Activated T-helper 1 cell treated with anti-CD3 and anti-CD28 coated beads, Interleukin-12 subunit alpha, Interleukin-12 subunit beta, Interleukin-2, Interleukin-4 antibody, amounts not matched to agents 30 ng/mL and 10 ng/mL and 1 ng/mL, durations not matched to agents 14 hours and 24 hours and 36 hours (primary cell): ENCODE measurements at regions of chr15 and their contacts with region 1.

Region 1: GRCh38 chr15:75201609-75202250 is at the start of gene C15orf39:
- DNase-seq: peak; percentile 74
- H3K4me3 Mint-ChIP-seq: peak within 1 kb of the TSS; percentile 92
- H3K27ac Mint-ChIP-seq: peak within 1 kb of the TSS; percentile 90
- H3K4me1 Mint-ChIP-seq: peaks cover 62% of the 10 kb centered on the region
- H3K27me3 Mint-ChIP-seq: peaks cover 4% of the 10 kb centered on the region
- total RNA-seq, gene C15orf39: 46.1 and 49.5 TPM in 2 replicates

Region 2: DNA sequence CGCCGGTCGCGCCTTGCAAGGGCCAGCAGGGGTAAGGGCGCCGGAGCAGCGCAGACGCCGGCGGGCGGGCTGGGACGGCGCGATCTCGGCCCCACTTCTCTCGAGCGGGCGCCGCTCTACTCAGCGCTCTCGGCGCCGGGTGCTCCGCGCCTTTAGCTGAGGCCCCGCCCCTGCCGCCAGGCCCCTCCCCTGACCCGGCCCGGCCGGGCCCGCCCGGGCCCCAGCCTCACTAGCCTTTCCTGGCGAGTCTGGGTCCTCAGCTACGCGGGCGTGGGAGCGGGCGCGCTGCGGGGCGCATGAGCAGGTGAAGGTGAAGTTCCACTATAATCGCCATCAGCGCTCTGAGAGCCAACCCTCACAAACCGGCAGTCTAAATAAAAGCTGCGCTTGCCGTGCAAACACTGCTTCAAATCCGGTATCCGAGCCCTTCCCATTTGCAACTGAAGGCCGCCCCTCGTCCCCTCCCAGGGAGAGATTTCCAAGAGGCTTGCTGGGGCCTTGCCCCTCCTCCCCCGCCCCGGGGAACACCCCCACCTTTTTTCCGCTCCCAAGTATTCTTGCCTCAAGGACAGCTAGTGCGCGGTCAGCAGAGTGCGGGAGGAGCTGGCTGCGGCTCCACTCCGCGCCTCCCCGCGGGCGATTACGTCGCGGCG is 245.0 kb before region 1 on chr15 and contains the start of gene RPP25:
- intact Hi-C with region 1: loop called (anchors 1 kb)
- DNase-seq: peak; percentile 69
- H3K4me3 Mint-ChIP-seq: peak within 1 kb of the TSS; percentile 70
- H3K27ac Mint-ChIP-seq: no peak within 1 kb of the TSS
- H3K4me1 Mint-ChIP-seq: peaks cover 36% of the 10 kb centered on the region
- H3K27me3 Mint-ChIP-seq: peaks cover 44% of the 10 kb centered on the region
- total RNA-seq, gene RPP25: 13.3 and 15.3 TPM in 2 replicates

Region 3: GRCh38 chr15:75029378-75030022 is 172.2 kb before region 1 on chr15:
- intact Hi-C with region 1: loop called (anchors 1 kb)
- DNase-seq: peak; percentile 80
- H3K4me3 Mint-ChIP-seq: peak overlapping the region; percentile 37
- H3K27ac Mint-ChIP-seq: peak overlapping the region; percentile 51
- H3K4me1 Mint-ChIP-seq: peaks cover 52% of the 10 kb centered on the region
- H3K27me3 Mint-ChIP-seq: no peaks in the 10 kb centered on the region

Region 4: DNA sequence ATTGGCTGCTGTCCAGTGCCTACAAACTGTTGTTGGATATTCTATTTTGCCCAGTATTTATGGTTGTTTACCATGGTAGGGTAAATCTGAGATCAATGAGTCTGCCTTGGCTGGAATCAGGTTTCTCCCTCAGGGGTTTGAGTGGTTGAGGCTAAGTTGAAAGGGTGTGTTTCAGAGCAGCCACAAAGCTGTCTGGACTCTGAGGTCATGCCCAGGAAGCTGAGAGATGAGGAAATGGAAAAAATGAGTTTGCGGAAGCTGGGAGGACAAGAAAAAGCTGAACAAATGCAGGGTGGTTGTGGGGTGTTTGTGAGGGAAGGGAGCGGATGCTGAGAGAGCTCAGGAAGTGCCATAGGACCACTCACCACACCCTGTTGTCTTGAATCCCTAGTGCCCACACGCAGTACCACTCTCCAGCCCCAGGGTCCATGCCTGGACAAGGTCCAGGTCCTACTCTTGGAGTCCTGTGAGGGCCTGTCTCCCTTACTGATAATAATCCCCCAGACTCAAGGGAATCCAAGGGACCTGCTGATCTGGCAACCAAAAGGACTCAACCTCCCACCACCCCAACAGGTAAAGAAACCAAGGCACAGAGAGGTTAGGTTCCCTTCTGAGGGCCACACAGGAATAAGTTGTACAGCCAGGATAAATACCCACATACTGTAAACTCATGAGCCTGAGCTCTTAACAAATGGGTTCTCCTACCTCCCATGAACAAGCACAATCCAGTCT is 96.8 kb before region 1 on chr15:
- intact Hi-C with region 1: loop called (anchors 1 kb)
- DNase-seq: peak; percentile 55
- H3K4me3 Mint-ChIP-seq: peak overlapping the region; percentile 28
- H3K27ac Mint-ChIP-seq: peak overlapping the region; percentile 89
- H3K4me1 Mint-ChIP-seq: peaks cover 52% of the 10 kb centered on the region
- H3K27me3 Mint-ChIP-seq: peaks cover 5% of the 10 kb centered on the region

Region 5: GRCh38 chr15:75171408-75171807 is 30.3 kb before region 1 on chr15:
- intact Hi-C with region 1: loop called (anchors 2 kb)
- DNase-seq: peak; percentile 43
- H3K4me3 Mint-ChIP-seq: peak overlapping the region; percentile 24
- H3K27ac Mint-ChIP-seq: peak overlapping the region; percentile 71
- H3K4me1 Mint-ChIP-seq: peaks cover 62% of the 10 kb centered on the region
- H3K27me3 Mint-ChIP-seq: no peaks in the 10 kb centered on the region

Region 6: DNA sequence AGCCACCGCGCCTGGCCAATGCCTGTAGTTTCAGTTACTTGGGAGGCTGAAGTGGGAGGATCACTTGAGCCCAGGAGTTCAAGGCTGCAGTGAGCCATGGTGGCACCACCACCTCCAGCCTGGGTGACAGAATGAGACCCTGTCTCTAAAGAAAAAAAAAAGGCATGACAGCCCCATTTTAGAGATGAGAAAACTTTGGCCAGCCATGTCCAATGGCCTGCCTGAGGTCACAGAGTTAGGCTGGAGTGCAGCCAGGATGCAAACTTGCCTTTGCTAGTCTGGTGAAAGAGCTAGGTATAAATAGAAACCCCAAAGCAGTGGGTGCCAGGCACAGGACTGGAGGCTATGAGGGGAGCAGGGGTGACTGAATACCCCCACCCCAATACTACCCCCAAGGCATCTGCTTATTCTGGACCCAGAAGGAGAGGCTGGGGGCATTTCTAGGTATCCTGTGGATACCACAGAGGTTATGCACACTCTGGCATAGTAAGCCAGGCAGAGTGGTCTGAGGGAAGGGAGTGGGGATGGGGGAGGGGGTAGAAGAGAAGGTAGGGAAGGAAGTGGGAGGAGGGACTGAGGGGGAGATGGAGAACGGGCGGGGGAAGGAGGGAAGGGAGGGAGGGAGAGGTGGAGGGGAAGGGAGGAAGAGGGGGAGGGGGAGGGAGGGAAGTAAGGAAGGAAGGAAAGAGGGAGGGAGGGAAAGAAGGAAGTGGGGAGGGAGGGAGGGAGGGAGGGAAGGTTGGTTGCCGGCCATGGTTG is 16.3 kb before region 1 on chr15:
- intact Hi-C with region 1: no loop called
- DNase-seq: no peak
- H3K4me3 Mint-ChIP-seq: no peak overlapping the region
- H3K27ac Mint-ChIP-seq: no peak overlapping the region
- H3K4me1 Mint-ChIP-seq: peaks cover 11% of the 10 kb centered on the region
- H3K27me3 Mint-ChIP-seq: peaks cover 20% of the 10 kb centered on the region

Region 7: GRCh38 chr15:75227663-75228280 is 26.0 kb after region 1 on chr15:
- intact Hi-C with region 1: no loop called
- DNase-seq: no peak
- H3K4me3 Mint-ChIP-seq: no peak overlapping the region
- H3K27ac Mint-ChIP-seq: no peak overlapping the region
- H3K4me1 Mint-ChIP-seq: no peaks in the 10 kb centered on the region
- H3K27me3 Mint-ChIP-seq: peaks cover 4% of the 10 kb centered on the region

Region 8: GRCh38 chr15:75836953-75837321 is 635.2 kb after region 1 on chr15:
- intact Hi-C with region 1: no loop called
- DNase-seq: peak; percentile 55
- H3K4me3 Mint-ChIP-seq: no peak overlapping the region
- H3K27ac Mint-ChIP-seq: no peak overlapping the region
- H3K4me1 Mint-ChIP-seq: peaks cover 13% of the 10 kb centered on the region
- H3K27me3 Mint-ChIP-seq: peaks cover 6% of the 10 kb centered on the region